ENCODE measurements at regions of chr11 and their contacts with region 1.

Region 1: GRCh38 chr11:34055218-34056000 is 3.9 kb downstream of the CAPRIN1 start:
- DNase-seq: no peak
- ATAC-seq: no peak
- H3K4me3 ChIP-seq: no peak overlapping the region
- H3K27ac ChIP-seq: peak overlapping the region; percentile 98; the same call in 1 of the 2 replicates
- H3K4me1 ChIP-seq: peaks cover 44% of the 10 kb centered on the region
- H3K27me3 ChIP-seq: no peaks in the 10 kb centered on the region
- CTCF ChIP-seq: no peak

Region 2: GRCh38 chr11:33996498-33997454 is 58.6 kb before region 1 on chr11:
- CTCF ChIA-PET with region 1: no interaction called
- POLR2A ChIA-PET with region 1: no interaction called
- in situ Hi-C with region 1: no loop called
- intact Hi-C with region 1: loop called (anchors 5 kb)
- DNase-seq: peak; percentile 54
- ATAC-seq: peak; percentile 99
- H3K4me3 ChIP-seq: peak overlapping the region; percentile 10 to 44; a peak in 2 of 4 replicates
- H3K27ac ChIP-seq: no peak overlapping the region
- H3K4me1 ChIP-seq: peaks cover 8% of the 10 kb centered on the region
- H3K27me3 ChIP-seq: no peaks in the 10 kb centered on the region
- CTCF ChIP-seq: peak; percentile 90

Measured in Panc1 (cell line).